Activated T-helper 1 cell treated with anti-CD3 and anti-CD28 coated beads, Interleukin-12 subunit alpha, Interleukin-12 subunit beta, Interleukin-2, Interleukin-4 antibody, amounts not matched to agents 30 ng/mL and 10 ng/mL and 1 ng/mL, durations not matched to agents 14 hours and 24 hours and 36 hours (primary cell): ENCODE measurements at regions of chr20 and their contacts with region 1.

Region 1: DNA sequence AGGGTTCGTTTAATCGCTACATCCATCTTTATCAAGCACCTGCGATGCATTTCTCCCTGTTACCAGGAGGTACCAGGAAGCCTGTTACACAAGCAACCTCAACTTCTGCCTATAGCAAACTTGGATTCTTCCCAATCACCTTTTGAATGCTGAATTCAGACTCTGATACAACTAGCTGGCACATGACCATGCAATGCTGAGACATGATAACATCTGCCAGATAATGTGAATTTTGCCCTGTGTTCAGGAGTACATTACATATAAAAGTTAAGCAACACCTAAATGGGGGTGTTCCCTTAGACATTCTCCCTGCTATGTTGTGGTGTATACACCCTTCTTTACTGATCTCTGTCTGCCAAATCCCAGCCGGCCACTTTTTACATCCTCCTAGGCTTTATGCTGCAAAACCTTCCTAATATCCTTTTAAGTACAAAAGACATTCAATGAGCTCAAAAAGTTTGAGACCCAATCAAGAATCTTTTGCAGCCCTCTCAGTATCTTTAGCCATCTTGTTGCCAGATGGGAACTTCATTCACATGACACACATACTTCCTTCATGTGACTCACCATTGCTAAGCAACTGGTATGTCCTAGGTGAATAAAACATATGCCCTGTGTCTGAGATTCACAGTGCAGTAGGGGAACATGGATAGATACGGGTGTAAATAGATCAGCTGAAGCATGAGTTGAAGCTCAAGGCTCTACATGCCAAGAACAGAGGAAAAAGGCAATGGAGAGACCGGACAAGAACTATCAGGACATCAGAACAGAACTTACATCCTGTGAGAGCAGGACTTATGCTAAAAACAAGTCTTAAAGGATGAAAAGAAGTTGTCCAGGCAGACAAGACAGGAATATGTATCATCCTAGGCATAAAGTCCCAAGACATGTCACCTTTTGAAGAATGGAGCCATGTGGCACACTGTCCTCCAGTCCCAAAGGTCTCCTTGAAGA is 84.3 kb downstream of the ZHX3 start:
- DNase-seq: no peak
- H3K4me3 Mint-ChIP-seq: no peak overlapping the region
- H3K27ac Mint-ChIP-seq: no peak overlapping the region
- H3K4me1 Mint-ChIP-seq: peaks cover 30% of the 10 kb centered on the region
- H3K27me3 Mint-ChIP-seq: no peaks in the 10 kb centered on the region

Region 2: GRCh38 chr20:41017390-41018042 is 215.7 kb before region 1 on chr20:
- intact Hi-C with region 1: no loop called
- DNase-seq: no peak
- H3K4me3 Mint-ChIP-seq: no peak overlapping the region
- H3K27ac Mint-ChIP-seq: no peak overlapping the region
- H3K4me1 Mint-ChIP-seq: peaks cover 10% of the 10 kb centered on the region
- H3K27me3 Mint-ChIP-seq: peaks cover 3% of the 10 kb centered on the region

Region 3: DNA sequence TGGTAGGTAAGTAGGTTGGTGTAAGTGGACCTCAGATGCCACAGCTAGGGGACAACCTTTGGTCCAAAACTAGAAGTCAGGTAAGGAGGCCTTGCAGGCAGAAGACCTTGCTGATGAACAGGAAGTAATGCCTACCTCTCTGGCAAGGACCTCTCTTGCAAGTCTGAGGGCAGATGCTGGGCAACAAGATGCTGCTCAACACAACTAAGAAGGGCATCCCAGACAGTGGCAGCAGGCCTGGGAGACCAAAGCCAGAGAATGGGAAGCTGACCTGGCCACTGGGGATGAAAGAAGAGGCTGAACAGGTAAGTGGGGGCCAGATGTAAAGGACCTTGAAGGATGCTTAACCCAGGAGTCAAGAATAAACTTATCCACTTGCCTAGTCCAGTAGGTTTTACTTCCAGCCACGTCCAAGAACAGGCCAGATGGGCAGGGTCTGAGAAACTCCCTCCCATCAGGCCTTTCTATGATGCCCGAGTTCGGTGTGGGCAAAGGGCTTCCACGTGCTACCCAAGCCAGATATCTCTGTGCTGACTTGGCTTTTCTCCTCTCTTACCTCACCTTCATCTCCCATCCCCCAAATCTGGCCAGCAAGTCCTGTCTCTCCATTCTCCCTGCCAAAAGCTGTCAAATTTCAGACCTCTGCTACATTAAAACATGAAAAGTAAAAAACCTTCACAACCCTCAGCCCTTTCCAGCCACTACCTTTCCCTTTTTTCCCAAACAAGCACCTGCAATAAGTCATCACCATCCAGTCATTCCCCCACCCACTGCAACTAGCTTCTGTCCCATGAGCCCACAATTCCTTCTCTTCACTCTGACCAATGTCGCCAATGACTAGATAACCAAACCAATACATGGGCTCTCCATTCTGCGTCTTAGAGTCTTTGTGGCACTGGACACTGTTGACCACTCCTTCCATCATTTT is 107.5 kb before region 1 on chr20:
- intact Hi-C with region 1: no loop called
- DNase-seq: no peak
- H3K4me3 Mint-ChIP-seq: no peak overlapping the region
- H3K27ac Mint-ChIP-seq: no peak overlapping the region
- H3K4me1 Mint-ChIP-seq: peaks cover 9% of the 10 kb centered on the region
- H3K27me3 Mint-ChIP-seq: no peaks in the 10 kb centered on the region

Region 4: GRCh38 chr20:41161886-41162285 is 71.4 kb before region 1 on chr20:
- intact Hi-C with region 1: loop called (anchors 1 kb)
- DNase-seq: no peak
- H3K4me3 Mint-ChIP-seq: peak overlapping the region; percentile 24
- H3K27ac Mint-ChIP-seq: peak overlapping the region; percentile 80
- H3K4me1 Mint-ChIP-seq: peaks cover 59% of the 10 kb centered on the region
- H3K27me3 Mint-ChIP-seq: no peaks in the 10 kb centered on the region

Region 5: GRCh38 chr20:41185013-41185757 is 48.1 kb before region 1 on chr20:
- intact Hi-C with region 1: loop called (anchors 1 kb)
- DNase-seq: no peak
- H3K4me3 Mint-ChIP-seq: no peak overlapping the region
- H3K27ac Mint-ChIP-seq: no peak overlapping the region
- H3K4me1 Mint-ChIP-seq: peaks cover 9% of the 10 kb centered on the region
- H3K27me3 Mint-ChIP-seq: no peaks in the 10 kb centered on the region

Region 6: GRCh38 chr20:41339507-41340326 is 106.5 kb after region 1 on chr20:
- intact Hi-C with region 1: loop called (anchors 1 kb)
- DNase-seq: peak; percentile 78
- H3K4me3 Mint-ChIP-seq: peak overlapping the region; percentile 86
- H3K27ac Mint-ChIP-seq: no peak overlapping the region
- H3K4me1 Mint-ChIP-seq: peaks cover 13% of the 10 kb centered on the region
- H3K27me3 Mint-ChIP-seq: peaks cover 14% of the 10 kb centered on the region